ENCODE measurements at regions of chr7 and their contacts with region 1.

Region 1: GRCh38 chr7:111098011-111098925 is 7.3 kb downstream of the LRRN3 start:
- DNase-seq: peak; percentile 33
- ATAC-seq: peak in 1 of 2 donors; percentile 74

Region 2: GRCh38 chr7:109844362-109844761 is 1253.9 kb before region 1 on chr7:
- intact Hi-C with region 1: loop called in 1 of 2 experiments (anchors 10 kb)
- DNase-seq: no peak
- ATAC-seq: no peak

Region 3: GRCh38 chr7:110090110-110090769 is 1008.0 kb before region 1 on chr7:
- intact Hi-C with region 1: loop called in 1 of 2 experiments (anchors 5 kb)
- DNase-seq: no peak
- ATAC-seq: no peak

Region 4: DNA sequence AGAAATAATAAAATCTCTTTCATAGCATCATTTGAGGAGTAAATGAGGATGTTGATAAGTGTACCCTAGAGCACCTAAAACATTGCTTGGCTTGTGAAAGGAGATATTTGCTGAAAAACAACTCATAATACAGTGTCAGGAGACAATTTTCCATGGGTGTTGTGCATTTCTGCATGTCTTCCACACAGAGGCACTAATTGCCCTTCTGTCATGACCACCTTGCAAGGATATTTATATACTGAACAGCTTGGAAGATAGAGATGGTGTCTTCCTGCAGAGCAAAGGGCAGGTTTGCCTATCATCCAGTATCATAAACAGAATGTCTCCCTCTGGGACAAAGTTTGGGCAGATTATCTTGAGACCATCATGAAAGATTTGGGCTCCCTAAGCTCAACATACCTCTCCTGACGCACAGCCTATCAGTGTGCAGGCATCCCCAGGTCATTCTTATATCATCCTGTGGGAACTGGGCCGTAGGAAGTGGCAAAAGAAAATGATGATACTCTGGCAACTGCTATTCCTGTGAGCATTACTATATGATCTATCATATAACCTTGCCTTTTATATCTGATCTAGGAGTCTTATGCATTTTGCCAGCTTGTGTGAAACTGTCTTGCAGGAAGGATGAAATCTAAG is 502.5 kb before region 1 on chr7:
- intact Hi-C with region 1: loop called in 1 of 2 experiments (anchors 5 kb)
- DNase-seq: no peak
- ATAC-seq: peak in 1 of 2 donors; percentile 50

Region 5: GRCh38 chr7:110988890-110989501 is 109.3 kb before region 1 on chr7:
- intact Hi-C with region 1: loop called in 1 of 2 experiments (anchors 10 kb)
- DNase-seq: no peak
- ATAC-seq: no peak

Region 6: GRCh38 chr7:111486472-111487142 is 388.3 kb after region 1 on chr7:
- intact Hi-C with region 1: loop called in 1 of 2 experiments (anchors 10 kb)
- DNase-seq: no peak
- ATAC-seq: peak in 1 of 2 donors; percentile 39

Region 7: GRCh38 chr7:111735661-111736551 is 637.6 kb after region 1 on chr7:
- intact Hi-C with region 1: loop called in 1 of 2 experiments (anchors 10 kb)
- DNase-seq: no peak
- ATAC-seq: peak; percentile 74 to 76